ENCODE measurements at regions of chr7 and their contacts with region 1.

Region 1: GRCh38 chr7:79282063-79282694 is 171.3 kb downstream of the MAGI2 start:
- DNase-seq: peak; percentile 37 to 60
- H3K4me3 ChIP-seq: no peak overlapping the region
- H3K4me3 Mint-ChIP-seq: peak overlapping the region; percentile 27
- H3K27ac Mint-ChIP-seq: peak overlapping the region; percentile 63
- H3K4me1 ChIP-seq: peaks cover 30% of the 10 kb centered on the region
- H3K4me1 Mint-ChIP-seq: peaks cover 22% of the 10 kb centered on the region
- H3K27me3 ChIP-seq: no peaks in the 10 kb centered on the region
- H3K27me3 Mint-ChIP-seq: no peaks in the 10 kb centered on the region
- CTCF ChIP-seq: peak in 1 of 2 experiments; percentile 44

Region 2: DNA sequence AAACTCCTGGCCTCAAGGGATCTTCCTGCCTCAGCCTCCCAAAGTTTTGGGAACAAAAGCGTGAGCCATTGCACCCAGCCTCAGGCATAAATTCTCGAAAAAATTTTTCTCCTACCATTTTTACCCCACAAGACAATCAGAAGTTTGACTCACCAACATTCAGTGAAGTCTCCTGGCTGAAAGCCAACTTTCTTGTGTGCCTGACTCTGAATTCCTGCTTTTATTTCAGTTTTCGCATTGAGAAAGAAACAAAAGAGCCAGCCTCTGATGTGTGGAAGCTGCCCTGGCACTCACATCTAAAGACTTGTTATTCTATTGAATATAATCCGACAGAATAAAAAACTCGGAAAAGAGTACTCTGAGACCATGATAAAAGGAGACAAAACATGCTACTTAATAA is 231.6 kb before region 1 on chr7:
- CTCF ChIA-PET with region 1: no interaction called
- POLR2A ChIA-PET with region 1: no interaction called
- intact Hi-C with region 1: no loop called
- DNase-seq: no peak
- H3K4me3 ChIP-seq: no peak overlapping the region
- H3K4me3 Mint-ChIP-seq: no peak overlapping the region
- H3K27ac Mint-ChIP-seq: no peak overlapping the region
- H3K4me1 ChIP-seq: 0 out of 2 replicates have a peak, but pooled peaks cover 4% of the 10 kb centered on the region
- H3K4me1 Mint-ChIP-seq: no peaks in the 10 kb centered on the region
- H3K27me3 ChIP-seq: no peaks in the 10 kb centered on the region; the same call in 1 of the 2 replicates
- H3K27me3 Mint-ChIP-seq: no peaks in the 10 kb centered on the region
- CTCF ChIP-seq: no peak

Region 3: DNA sequence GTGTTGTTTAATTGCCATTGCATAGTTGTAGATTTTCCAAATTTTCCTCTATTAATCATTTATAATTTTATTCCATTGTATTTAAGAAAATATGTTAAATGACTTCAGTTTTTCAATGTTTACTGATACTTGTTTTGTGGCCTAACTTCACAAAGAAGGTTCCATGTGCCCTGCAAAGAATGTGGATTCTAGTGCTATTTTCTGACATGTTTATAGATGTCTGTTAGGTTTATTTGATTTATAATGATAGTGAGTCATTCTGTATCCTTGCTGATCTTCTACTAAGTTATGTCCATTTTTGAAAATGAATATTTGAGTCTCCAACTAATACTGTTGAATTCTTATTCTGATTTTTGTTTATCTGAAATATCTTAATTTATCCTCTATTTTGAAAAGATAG is 197.8 kb before region 1 on chr7:
- CTCF ChIA-PET with region 1: no interaction called
- POLR2A ChIA-PET with region 1: no interaction called
- intact Hi-C with region 1: no loop called
- DNase-seq: no peak
- H3K4me3 ChIP-seq: no peak overlapping the region
- H3K4me3 Mint-ChIP-seq: no peak overlapping the region
- H3K27ac Mint-ChIP-seq: no peak overlapping the region
- H3K4me1 ChIP-seq: no peaks in the 10 kb centered on the region
- H3K4me1 Mint-ChIP-seq: peaks cover 10% of the 10 kb centered on the region
- H3K27me3 ChIP-seq: no peaks in the 10 kb centered on the region
- H3K27me3 Mint-ChIP-seq: no peaks in the 10 kb centered on the region
- CTCF ChIP-seq: no peak

Region 4: GRCh38 chr7:79258826-79259225 is 23.4 kb before region 1 on chr7:
- CTCF ChIA-PET with region 1: interaction called, 18 read pairs
- POLR2A ChIA-PET with region 1: no interaction called
- intact Hi-C with region 1: no loop called
- DNase-seq: no peak
- H3K4me3 ChIP-seq: no peak overlapping the region
- H3K4me3 Mint-ChIP-seq: no peak overlapping the region
- H3K27ac Mint-ChIP-seq: no peak overlapping the region
- H3K4me1 ChIP-seq: no peaks in the 10 kb centered on the region
- H3K4me1 Mint-ChIP-seq: no peaks in the 10 kb centered on the region
- H3K27me3 ChIP-seq: no peaks in the 10 kb centered on the region
- H3K27me3 Mint-ChIP-seq: no peaks in the 10 kb centered on the region
- CTCF ChIP-seq: no peak

Region 5: GRCh38 chr7:79292834-79293233 is 10.7 kb after region 1 on chr7:
- CTCF ChIA-PET with region 1: interaction called, 3 read pairs
- POLR2A ChIA-PET with region 1: no interaction called
- intact Hi-C with region 1: loop called (anchors 1 kb)
- DNase-seq: no peak
- H3K4me3 ChIP-seq: no peak overlapping the region
- H3K4me3 Mint-ChIP-seq: no peak overlapping the region
- H3K27ac Mint-ChIP-seq: peak overlapping the region; percentile 0
- H3K4me1 ChIP-seq: peaks cover 8% of the 10 kb centered on the region
- H3K4me1 Mint-ChIP-seq: peaks cover 7% of the 10 kb centered on the region
- H3K27me3 ChIP-seq: no peaks in the 10 kb centered on the region
- H3K27me3 Mint-ChIP-seq: no peaks in the 10 kb centered on the region
- CTCF ChIP-seq: no peak

Region 6: DNA sequence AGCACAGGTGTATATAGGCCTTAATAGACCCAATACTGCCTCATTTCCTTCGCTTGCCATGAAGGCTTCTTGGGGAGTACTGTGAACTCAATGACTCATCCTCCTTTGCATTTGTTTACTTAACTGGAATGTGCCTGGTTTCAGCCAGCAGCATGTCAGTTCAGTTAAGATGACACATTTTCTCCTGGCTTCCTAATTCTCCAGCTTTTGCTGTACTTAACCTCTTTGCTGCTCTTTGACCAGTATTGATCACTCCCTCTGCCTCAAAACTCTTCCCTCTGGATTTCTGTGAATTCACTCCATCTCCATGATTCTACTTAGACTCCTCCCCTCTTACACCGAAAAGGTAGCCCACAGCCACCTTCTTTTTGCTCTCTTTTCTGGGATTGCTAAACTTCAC is 35.5 kb after region 1 on chr7:
- CTCF ChIA-PET with region 1: no interaction called
- POLR2A ChIA-PET with region 1: no interaction called
- intact Hi-C with region 1: no loop called
- DNase-seq: peak in 1 of 2 experiments; percentile 29
- H3K4me3 ChIP-seq: no peak overlapping the region
- H3K4me3 Mint-ChIP-seq: no peak overlapping the region
- H3K27ac Mint-ChIP-seq: peak overlapping the region; percentile 12
- H3K4me1 ChIP-seq: peaks cover 10% of the 10 kb centered on the region
- H3K4me1 Mint-ChIP-seq: peaks cover 10% of the 10 kb centered on the region
- H3K27me3 ChIP-seq: no peaks in the 10 kb centered on the region
- H3K27me3 Mint-ChIP-seq: no peaks in the 10 kb centered on the region
- CTCF ChIP-seq: no peak

Measured in Caco-2 (cell line).